T-cell (primary cell): ENCODE measurements at regions of chr14 and their contacts with region 1.

Region 1: GRCh38 chr14:63770187-63770807 is 42.4 kb upstream of the SGPP1 start:
- DNase-seq: peak in 34 of 35 experiments; percentile 15 to 80 (median 53)
- ATAC-seq: peak; percentile 77 to 91 (median 84)
- H3K4me3 ChIP-seq: no peak overlapping the region
- H3K4me3 Mint-ChIP-seq: no peak overlapping the region
- H3K27ac ChIP-seq: no peak overlapping the region
- H3K27ac Mint-ChIP-seq: no peak overlapping the region
- H3K4me1 ChIP-seq: no peaks in the 10 kb centered on the region
- H3K4me1 Mint-ChIP-seq: peaks cover 4 to 9% (median 4%) of the 10 kb centered on the region in 3 donors
- H3K27me3 ChIP-seq: peaks cover 0 to 3% of the 10 kb centered on the region in 2 experiments
- H3K27me3 Mint-ChIP-seq: no peaks in the 10 kb centered on the region

Region 2: DNA sequence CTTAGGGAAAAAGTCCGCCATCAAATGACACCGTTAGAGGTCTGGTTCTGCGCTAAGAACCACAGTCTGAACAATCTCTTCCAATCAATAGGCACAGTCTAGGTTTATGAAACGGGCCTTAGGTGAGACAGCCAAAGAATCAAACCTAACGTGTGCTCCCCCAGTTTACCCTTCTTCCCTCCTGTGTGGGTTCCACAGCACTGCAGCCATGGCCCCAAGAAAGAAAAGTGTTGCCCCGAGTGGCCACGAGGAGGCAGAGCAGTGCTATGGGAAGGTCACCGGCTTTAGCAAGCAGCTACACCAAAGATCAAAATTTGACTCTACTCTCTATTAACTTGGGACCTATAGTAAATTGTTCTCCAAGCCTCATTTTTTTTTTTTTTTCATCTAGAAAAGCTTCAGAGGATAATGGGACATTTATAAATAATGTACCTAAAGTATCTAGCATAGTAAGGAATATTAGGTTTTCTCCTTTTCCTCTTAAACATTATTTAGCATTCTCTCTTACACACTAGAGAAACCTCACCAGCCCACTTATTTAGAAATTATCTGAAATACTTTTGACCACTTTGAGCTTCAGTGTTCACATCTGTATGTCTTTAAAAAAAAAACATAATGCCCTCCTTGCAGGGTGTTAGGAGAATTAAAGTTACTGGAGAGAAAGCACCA is 381.4 kb before region 1 on chr14:
- CTCF ChIA-PET with region 1: interaction called, 4 to 19 read pairs
- POLR2A ChIA-PET with region 1: no interaction called
- DNase-seq: peak in 33 of 35 experiments; percentile 5 to 59 (median 33)
- ATAC-seq: peak in 2 of 4 experiments; percentile 44 to 63
- H3K4me3 ChIP-seq: no peak overlapping the region
- H3K4me3 Mint-ChIP-seq: no peak overlapping the region
- H3K27ac ChIP-seq: no peak overlapping the region
- H3K27ac Mint-ChIP-seq: peak overlapping the region in 1 of 2 donors; percentile 22
- H3K4me1 ChIP-seq: peaks cover 0 to 5% of the 10 kb centered on the region in 2 experiments
- H3K4me1 Mint-ChIP-seq: peaks cover 5 to 7% (median 6%) of the 10 kb centered on the region in 3 donors
- H3K27me3 ChIP-seq: no peaks in the 10 kb centered on the region
- H3K27me3 Mint-ChIP-seq: no peaks in the 10 kb centered on the region

Region 3: DNA sequence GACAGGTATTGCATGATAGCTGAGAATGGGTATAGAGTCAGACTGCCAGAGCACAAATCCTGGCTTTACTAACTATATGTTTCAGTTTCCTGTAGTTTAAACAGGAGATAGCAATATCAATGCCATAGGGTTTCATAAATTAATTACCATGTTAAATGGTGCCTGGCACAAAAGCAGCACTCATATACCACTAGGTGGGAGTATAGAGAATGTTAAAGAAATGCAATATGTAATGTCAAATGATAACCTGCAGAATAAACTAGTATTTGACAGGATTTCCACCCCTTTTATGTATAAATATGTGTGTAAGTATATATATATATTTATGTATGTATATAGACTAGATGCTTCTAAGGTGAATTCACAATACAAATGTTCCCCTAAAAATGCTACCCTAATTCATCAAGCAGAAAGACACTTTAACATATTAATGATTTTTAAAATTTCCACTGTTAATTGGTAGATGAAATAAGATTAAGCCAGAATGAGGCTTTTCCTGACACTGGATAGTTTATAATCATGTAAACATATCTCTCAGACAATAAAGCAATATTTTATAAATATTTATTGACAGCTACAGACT is 137.3 kb before region 1 on chr14:
- CTCF ChIA-PET with region 1: interaction called, 23 to 28 read pairs
- POLR2A ChIA-PET with region 1: no interaction called
- DNase-seq: peak in 2 of 35 experiments; percentile 8 to 64
- ATAC-seq: peak; percentile 64 to 88 (median 81)
- H3K4me3 ChIP-seq: no peak overlapping the region
- H3K4me3 Mint-ChIP-seq: no peak overlapping the region
- H3K27ac ChIP-seq: no peak overlapping the region
- H3K27ac Mint-ChIP-seq: no peak overlapping the region
- H3K4me1 ChIP-seq: peaks cover 3% of the 10 kb centered on the region in 2 experiments
- H3K4me1 Mint-ChIP-seq: peaks cover 46 to 54% (median 51%) of the 10 kb centered on the region in 3 donors
- H3K27me3 ChIP-seq: no peaks in the 10 kb centered on the region
- H3K27me3 Mint-ChIP-seq: no peaks in the 10 kb centered on the region

Region 4: DNA sequence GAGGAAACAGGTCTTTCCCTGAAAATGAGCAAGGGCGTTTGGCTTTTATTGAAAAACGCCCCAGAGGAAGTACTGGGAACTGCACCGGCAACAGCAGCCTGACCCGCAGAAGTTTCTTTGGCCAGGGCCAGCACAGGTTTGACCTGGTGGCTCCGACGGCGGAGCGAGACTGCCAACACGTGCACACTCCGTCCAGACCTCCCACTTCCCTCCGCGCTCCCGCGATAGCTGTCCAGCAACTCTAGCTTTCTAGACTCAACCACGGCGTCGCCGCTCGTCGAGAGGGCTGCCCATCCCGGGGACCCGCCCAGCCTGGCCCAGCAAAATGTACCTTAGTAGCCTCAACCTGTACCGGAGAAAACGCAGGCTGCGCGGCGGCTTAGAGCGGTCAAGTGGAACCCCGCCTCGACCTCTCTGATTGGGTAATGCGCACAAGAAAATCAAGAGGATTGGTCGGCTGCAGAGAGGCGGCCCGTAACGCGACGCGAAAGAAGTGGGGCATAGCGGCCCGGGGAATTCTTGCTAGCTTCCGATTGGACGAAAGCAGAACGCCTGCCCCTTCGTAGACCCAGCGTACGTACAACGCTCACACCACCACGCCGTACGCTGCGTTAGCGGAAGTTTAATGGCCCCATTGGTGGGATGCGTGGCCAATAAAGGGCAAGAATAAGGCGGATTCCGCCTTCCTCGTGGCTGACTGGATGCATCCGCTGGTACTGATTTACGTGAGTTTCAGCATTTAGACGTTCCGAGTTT is 128.6 kb before region 1 on chr14 and contains the start of gene WDR89:
- CTCF ChIA-PET with region 1: interaction called in 1 of 2 experiments, 12 read pairs
- POLR2A ChIA-PET with region 1: interaction called in 1 of 2 experiments, 3 read pairs
- DNase-seq: peak; percentile 84 to 99 (median 96)
- ATAC-seq: peak; percentile 87 to 92 (median 90)
- H3K4me3 ChIP-seq: peak within 1 kb of the TSS; percentile 58 to 98
- H3K4me3 Mint-ChIP-seq: peak within 1 kb of the TSS; percentile 81 to 91 (median 90)
- H3K27ac ChIP-seq: peak within 1 kb of the TSS; percentile 94
- H3K27ac Mint-ChIP-seq: peak within 1 kb of the TSS; percentile 92 to 93
- H3K4me1 ChIP-seq: peaks cover 16 to 26% of the 10 kb centered on the region in 2 experiments
- H3K4me1 Mint-ChIP-seq: peaks cover 44 to 57% (median 54%) of the 10 kb centered on the region in 3 donors
- H3K27me3 ChIP-seq: no peaks in the 10 kb centered on the region
- H3K27me3 Mint-ChIP-seq: no peaks in the 10 kb centered on the region
- total RNA-seq, gene WDR89: 12.1 to 31.3 (median 25.7) TPM

Region 5: GRCh38 chr14:63727774-63728728 is 42.2 kb before region 1 on chr14 and contains the start of gene SGPP1:
- CTCF ChIA-PET with region 1: interaction called in 1 of 2 experiments, 12 read pairs
- POLR2A ChIA-PET with region 1: interaction called in 1 of 2 experiments, 3 read pairs
- DNase-seq: peak; percentile 61 to 91 (median 74)
- ATAC-seq: peak; percentile 89 to 92 (median 91)
- H3K4me3 ChIP-seq: peak within 1 kb of the TSS; percentile 77 to 84
- H3K4me3 Mint-ChIP-seq: peak within 1 kb of the TSS; percentile 99 to 100 (median 99)
- H3K27ac ChIP-seq: peak within 1 kb of the TSS; percentile 76
- H3K27ac Mint-ChIP-seq: peak within 1 kb of the TSS; percentile 94 to 97
- H3K4me1 ChIP-seq: peaks cover 14 to 21% of the 10 kb centered on the region in 2 experiments
- H3K4me1 Mint-ChIP-seq: peaks cover 45 to 49% (median 49%) of the 10 kb centered on the region in 3 donors
- H3K27me3 ChIP-seq: no peaks in the 10 kb centered on the region
- H3K27me3 Mint-ChIP-seq: no peaks in the 10 kb centered on the region
- total RNA-seq, gene SGPP1: 11.4 to 15.1 (median 13.5) TPM

Region 6: GRCh38 chr14:64823305-64823861 is 1053.1 kb after region 1 on chr14:
- CTCF ChIA-PET with region 1: no interaction called
- POLR2A ChIA-PET with region 1: no interaction called
- DNase-seq: peak; percentile 27 to 77 (median 51)
- ATAC-seq: peak; percentile 84 to 93 (median 86)
- H3K4me3 ChIP-seq: no peak overlapping the region
- H3K4me3 Mint-ChIP-seq: peak overlapping the region in 2 of 3 donors; percentile 6 to 61
- H3K27ac ChIP-seq: no peak overlapping the region
- H3K27ac Mint-ChIP-seq: no peak overlapping the region
- H3K4me1 ChIP-seq: peaks cover 0 to 8% of the 10 kb centered on the region in 2 experiments
- H3K4me1 Mint-ChIP-seq: peaks cover 5 to 10% (median 6%) of the 10 kb centered on the region in 3 donors
- H3K27me3 ChIP-seq: peaks cover 0 to 38% of the 10 kb centered on the region in 2 experiments
- H3K27me3 Mint-ChIP-seq: peaks cover 20 to 31% of the 10 kb centered on the region in 2 donors

Region 7: DNA sequence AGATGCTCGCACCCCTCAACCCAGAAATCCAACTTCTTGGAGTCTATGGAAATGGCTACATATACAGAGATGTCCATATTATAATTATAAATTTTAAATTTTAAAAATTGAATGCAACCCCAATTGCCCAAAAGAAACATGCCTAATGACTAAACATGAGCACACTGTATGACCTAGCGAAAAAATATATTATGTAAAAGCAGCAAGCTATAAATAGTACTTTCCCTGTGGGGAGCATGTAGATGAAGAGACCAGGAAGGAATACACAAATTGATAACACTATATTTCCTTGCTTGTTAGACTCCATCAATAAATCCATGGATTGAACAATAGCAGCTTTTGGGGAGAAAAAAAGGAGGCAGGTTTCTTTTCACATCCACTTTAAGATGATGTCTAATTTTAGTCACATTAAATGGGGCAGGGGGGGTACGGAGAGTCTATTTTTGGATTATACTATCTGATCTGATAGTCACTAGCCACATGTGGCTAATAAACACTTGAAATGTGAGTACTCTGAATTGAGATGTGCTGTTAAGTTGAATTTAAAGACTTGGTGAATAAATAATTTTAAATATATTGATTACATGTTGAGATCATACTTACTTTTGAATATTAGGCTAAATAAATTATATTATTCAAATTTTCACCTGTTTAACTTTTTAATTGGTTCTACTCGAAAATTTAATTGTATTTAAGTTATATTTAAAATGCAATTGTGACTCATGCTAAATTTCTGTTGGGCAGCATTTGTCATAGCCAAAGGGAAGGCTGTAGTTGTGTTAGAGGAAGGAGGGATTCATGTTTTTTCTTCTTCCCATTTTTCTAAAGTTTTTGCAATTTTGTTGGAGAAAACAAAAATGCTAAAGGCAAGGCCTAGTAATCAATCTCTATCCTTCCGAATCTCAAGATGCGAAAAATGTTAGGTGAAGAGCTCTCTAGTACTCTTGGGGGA is 1314.5 kb after region 1 on chr14:
- CTCF ChIA-PET with region 1: no interaction called
- POLR2A ChIA-PET with region 1: interaction called in 1 of 2 experiments, 10 read pairs
- DNase-seq: no peak
- ATAC-seq: no peak
- H3K4me3 ChIP-seq: no peak overlapping the region
- H3K4me3 Mint-ChIP-seq: peak overlapping the region in 1 of 3 donors; percentile 24
- H3K27ac ChIP-seq: no peak overlapping the region
- H3K27ac Mint-ChIP-seq: peak overlapping the region; percentile 37 to 63
- H3K4me1 ChIP-seq: peaks cover 8 to 29% of the 10 kb centered on the region in 2 experiments
- H3K4me1 Mint-ChIP-seq: peaks cover 74 to 87% (median 86%) of the 10 kb centered on the region in 3 donors
- H3K27me3 ChIP-seq: no peaks in the 10 kb centered on the region
- H3K27me3 Mint-ChIP-seq: no peaks in the 10 kb centered on the region